SK-N-SH (cell line): ENCODE measurements at regions of chr4 and their contacts with region 1.

Region 1: DNA sequence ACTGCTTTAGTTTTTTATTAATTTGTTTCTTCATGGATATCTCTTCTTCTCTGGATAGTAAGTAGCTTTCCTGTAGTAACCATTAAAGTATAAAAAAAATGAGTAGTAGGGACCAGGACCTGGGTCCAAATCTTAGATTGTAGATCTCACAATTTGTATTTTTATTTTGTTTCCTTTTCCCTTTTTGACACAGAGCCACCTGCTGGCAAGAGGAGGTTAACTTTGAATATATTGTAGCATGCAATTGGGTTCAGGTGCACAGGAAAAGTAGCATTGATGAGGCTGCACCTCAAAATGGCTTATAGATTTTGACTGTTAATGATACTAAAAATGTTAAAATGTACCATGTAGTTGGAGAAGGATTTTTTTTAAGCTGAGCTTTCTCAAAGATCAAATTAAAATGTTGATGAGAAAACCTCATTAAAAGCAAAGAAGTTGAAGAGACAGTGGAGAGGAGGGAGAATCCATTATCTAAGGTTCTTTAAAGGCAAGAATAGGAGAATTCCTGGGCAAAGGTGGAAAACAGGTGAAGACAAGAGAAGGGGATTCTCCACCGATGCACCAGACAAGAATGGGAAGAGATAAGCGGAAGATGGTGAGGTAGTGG is 48.3 kb upstream of the HPGDS start:
- DNase-seq: peak; percentile 20
- H3K4me3 ChIP-seq: no peak overlapping the region
- H3K27ac ChIP-seq: no peak overlapping the region
- H3K4me1 ChIP-seq: no peaks in the 10 kb centered on the region
- H3K27me3 ChIP-seq: no peaks in the 10 kb centered on the region
- CTCF ChIP-seq: peak; percentile 72
- EP300 ChIP-seq: no peak
- RAD21 ChIP-seq: peak; percentile 65

Region 2: DNA sequence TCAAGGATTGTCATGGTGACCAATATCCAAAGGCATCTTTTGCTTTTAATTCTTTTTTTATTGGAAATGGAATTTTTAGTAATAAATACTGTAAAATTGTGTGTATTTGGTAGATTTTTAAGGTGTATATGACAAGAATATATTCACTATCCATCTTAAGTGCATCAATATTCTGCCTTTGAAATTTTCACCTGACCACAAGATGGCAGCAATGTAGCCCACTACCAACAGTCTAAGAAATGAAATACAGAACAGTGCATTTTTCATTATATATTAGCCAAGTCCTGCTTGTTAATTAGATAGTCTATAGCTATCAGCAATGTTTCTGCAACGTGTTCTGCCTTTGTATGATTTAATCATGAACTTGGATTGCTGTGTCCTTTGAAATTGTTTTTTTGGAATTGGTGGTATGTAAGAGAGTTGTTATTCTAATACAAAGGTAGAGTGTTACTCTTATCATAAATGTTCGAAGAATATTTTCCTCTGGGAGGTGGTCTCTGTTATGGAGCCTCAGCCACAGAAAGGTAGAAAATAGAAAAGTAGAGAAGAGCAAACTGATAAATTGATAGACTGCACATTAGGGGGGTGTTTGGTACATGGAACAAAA is 86.4 kb before region 1 on chr4:
- CTCF ChIA-PET with region 1: interaction called, 30 read pairs
- POLR2A ChIA-PET with region 1: no interaction called
- DNase-seq: peak; percentile 29
- H3K4me3 ChIP-seq: no peak overlapping the region; a peak in 1 of 4 replicates
- H3K27ac ChIP-seq: no peak overlapping the region
- H3K4me1 ChIP-seq: no peaks in the 10 kb centered on the region; a peak in 2 of 4 replicates
- H3K27me3 ChIP-seq: no peaks in the 10 kb centered on the region
- CTCF ChIP-seq: peak; percentile 85
- EP300 ChIP-seq: no peak
- RAD21 ChIP-seq: peak; percentile 86